OCI-LY7 (cell line): ENCODE measurements at regions of chr2 and their contacts with region 1.

Region 1: GRCh38 chr2:46954948-46955571 is 39.5 kb upstream of the MCFD2 start:
- DNase-seq: no peak
- H3K4me3 ChIP-seq: no peak overlapping the region
- H3K27ac ChIP-seq: no peak overlapping the region
- H3K4me1 ChIP-seq: peaks cover 17% of the 10 kb centered on the region
- CTCF ChIP-seq: no peak

Region 2: GRCh38 chr2:46937471-46937901 is 17.6 kb before region 1 on chr2:
- CTCF ChIA-PET with region 1: interaction called, 3 read pairs
- POLR2A ChIA-PET with region 1: interaction called, 10 read pairs
- intact Hi-C with region 1: no loop called
- DNase-seq: no peak
- H3K4me3 ChIP-seq: no peak overlapping the region
- H3K27ac ChIP-seq: no peak overlapping the region
- H3K4me1 ChIP-seq: peaks cover 50% of the 10 kb centered on the region
- CTCF ChIP-seq: peak; percentile 80

Region 3: GRCh38 chr2:46943881-46944798 is 10.9 kb before region 1 on chr2:
- CTCF ChIA-PET with region 1: no interaction called
- POLR2A ChIA-PET with region 1: interaction called, 10 read pairs
- intact Hi-C with region 1: no loop called
- DNase-seq: peak; percentile 69
- H3K4me3 ChIP-seq: peak overlapping the region; percentile 87
- H3K27ac ChIP-seq: peak overlapping the region; percentile 86
- H3K4me1 ChIP-seq: peaks cover 62% of the 10 kb centered on the region
- CTCF ChIP-seq: no peak